Psoas muscle (tissue), 8 donors: ENCODE measurements at regions of chr3 and their contacts with region 1.

Region 1: GRCh38 chr3:49339945-49340800 is at the start of gene USP4:
- DNase-seq: peak; percentile 90 to 94
- ATAC-seq: peak; percentile 94 to 97 (median 94)
- H3K4me3 ChIP-seq: peak within 1 kb of the TSS; percentile 98
- H3K27ac ChIP-seq: peak within 1 kb of the TSS; percentile 92
- H3K4me1 ChIP-seq: peaks cover 15% of the 10 kb centered on the region
- H3K27me3 ChIP-seq: no peaks in the 10 kb centered on the region
- CTCF ChIP-seq: peak; percentile 22
- total RNA-seq, gene USP4: 26.7 to 35.2 (median 31.1) TPM

Region 2: DNA sequence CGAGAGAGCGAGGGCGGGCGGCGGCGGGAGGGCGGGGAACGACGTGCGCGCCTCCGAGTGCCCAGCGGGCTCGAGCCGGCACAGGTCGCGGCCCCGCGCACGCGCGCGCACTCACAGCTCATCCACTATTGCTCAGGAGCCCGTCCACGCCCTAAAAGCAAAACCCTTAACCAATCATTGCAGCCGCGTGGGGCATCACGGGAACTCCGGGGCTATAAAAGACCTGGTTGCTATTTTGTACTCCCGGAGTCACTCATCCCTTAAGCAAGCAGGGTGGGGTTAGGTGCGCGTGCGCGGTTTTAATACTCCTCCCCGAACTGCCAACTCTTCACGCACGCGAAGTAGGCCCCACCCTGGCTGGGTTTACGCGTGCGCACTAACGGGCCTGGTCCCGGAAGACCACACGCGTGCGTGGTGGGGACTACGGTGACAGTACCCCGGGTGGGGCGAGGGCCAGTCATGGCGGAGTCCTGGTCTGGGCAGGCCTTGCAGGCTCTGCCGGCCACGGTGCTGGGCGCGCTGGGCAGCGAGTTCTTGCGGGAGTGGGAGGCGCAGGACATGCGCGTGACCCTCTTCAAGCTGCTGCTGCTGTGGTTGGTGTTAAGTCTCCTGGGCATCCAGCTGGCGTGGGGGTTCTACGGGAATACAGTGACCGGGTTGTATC is 71.9 kb after region 1 on chr3 and contains the starts of genes RHOA and TCTA:
- intact Hi-C with region 1: loop called in 1 of 2 experiments (anchors 5 kb)
- DNase-seq: peak; percentile 99 to 100
- ATAC-seq: peak; percentile 92 to 94 (median 93)
- H3K4me3 ChIP-seq: peak within 1 kb of the TSS; percentile 87
- H3K27ac ChIP-seq: peak within 1 kb of the TSS; percentile 99
- H3K4me1 ChIP-seq: peaks cover 42% of the 10 kb centered on the region
- H3K27me3 ChIP-seq: no peaks in the 10 kb centered on the region
- CTCF ChIP-seq: no peak
- total RNA-seq, gene RHOA: 251 to 334 (median 271) TPM
- total RNA-seq, gene TCTA: 11.4 to 23.4 (median 16.7) TPM

Region 3: DNA sequence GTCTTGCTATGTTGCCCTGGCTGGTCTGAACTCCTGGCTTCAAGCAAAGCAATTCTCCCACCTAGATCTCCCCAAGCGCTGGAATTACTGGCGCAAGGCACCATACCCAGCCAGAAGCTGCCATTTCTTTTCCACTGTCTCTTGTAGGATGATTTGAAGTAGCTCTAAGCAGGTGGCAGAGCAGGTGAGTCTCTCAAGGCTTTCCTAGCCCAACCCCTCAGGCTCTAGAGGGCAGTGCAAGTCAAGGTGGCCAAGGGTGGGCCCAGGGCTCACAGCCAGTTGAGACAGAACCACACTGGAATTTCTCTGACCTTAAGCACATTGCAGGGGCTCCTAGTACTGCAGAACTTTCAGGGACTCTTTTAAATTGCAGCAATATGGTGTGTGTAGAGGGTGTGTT is 114.3 kb after region 1 on chr3:
- intact Hi-C with region 1: loop called in 1 of 2 experiments (anchors 2 kb)
- DNase-seq: peak in 1 of 2 donors; percentile 65
- ATAC-seq: peak; percentile 80 to 90 (median 85)
- H3K4me3 ChIP-seq: no peak overlapping the region
- H3K27ac ChIP-seq: peak overlapping the region; percentile 42
- H3K4me1 ChIP-seq: peaks cover 15% of the 10 kb centered on the region
- H3K27me3 ChIP-seq: no peaks in the 10 kb centered on the region
- CTCF ChIP-seq: peak; percentile 35